Psoas muscle (tissue), 8 donors: ENCODE measurements at regions of chr10 and their contacts with region 1.

Region 1: DNA sequence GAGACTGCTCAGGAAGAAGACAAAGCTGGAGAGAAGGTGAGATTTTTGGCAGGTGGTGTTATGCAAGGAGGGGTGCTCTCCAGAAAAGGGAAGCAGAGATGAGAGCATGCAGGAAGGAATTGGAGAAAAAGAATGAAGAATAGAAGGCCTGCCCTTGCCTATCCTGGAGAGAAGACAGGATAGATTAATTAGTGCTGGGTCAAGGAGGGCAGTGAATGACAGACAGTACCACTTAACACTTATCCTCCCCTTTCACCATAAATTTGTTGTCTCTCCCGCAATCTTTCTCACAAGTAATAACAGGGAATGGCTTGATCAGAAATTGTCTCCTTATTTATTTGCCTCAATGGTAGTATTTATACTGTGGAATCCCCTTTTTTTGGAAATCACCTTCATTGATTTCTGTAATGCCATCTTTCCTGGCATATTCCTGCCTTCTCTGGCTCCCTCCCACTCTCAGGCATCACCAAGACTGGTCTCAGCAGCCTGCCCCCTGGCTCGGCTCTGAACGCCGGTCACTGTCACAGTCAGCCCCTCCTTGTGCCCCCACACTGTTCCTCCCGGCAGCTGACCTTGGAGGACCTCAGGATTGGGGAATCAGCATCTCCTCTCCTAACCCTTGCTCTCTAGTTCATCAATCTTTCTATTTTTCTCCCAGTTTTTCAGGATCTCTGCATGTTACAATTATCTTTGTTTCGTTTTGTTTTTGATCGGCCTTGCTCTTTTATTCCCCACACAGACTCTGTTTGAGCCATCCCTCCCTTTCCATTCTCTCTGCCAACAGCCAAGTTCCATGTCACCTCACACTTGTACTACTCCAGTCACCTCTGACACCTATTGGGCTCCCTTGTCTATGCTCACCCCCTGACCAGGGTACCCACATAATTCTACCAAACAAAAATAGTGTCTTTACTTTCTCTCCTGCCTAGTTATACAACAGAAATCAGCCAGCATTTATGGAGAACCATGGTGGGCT is 294.2 kb downstream of the PLXDC2 start:
- DNase-seq: no peak
- ATAC-seq: no peak
- H3K4me3 ChIP-seq: no peak overlapping the region
- H3K27ac ChIP-seq: no peak overlapping the region
- H3K4me1 ChIP-seq: no peaks in the 10 kb centered on the region
- H3K27me3 ChIP-seq: no peaks in the 10 kb centered on the region
- CTCF ChIP-seq: no peak

Region 2: DNA sequence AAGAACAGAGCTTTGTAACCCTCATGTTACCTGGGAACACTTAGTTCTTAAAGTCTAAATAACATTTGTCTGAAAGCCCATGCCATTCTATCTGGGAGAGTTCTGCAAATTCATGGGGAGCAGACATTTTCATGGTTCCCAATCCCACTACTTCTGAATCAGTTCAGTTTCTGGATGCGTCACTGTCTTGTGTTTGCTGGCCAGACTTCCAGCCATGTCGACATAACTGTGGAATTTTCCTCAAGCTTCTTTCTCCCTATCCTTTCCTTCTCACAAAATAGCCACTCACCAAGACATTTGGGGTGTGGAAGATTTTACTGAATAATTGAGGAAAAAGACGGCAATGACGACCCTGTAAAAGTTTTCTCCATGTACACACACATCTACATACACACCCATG is 514.2 kb after region 1 on chr10:
- intact Hi-C with region 1: loop called in 1 of 2 experiments (anchors 5 kb)
- DNase-seq: peak; percentile 24 to 51
- ATAC-seq: peak in 1 of 4 donors; percentile 49
- H3K4me3 ChIP-seq: no peak overlapping the region
- H3K27ac ChIP-seq: no peak overlapping the region
- H3K4me1 ChIP-seq: no peaks in the 10 kb centered on the region
- H3K27me3 ChIP-seq: no peaks in the 10 kb centered on the region
- CTCF ChIP-seq: no peak